Activated B cell treated with CpG ODN at 0.5 μM for 24 hours (primary cell): ENCODE measurements at regions of chr20 and their contacts with region 1.

Region 1: DNA sequence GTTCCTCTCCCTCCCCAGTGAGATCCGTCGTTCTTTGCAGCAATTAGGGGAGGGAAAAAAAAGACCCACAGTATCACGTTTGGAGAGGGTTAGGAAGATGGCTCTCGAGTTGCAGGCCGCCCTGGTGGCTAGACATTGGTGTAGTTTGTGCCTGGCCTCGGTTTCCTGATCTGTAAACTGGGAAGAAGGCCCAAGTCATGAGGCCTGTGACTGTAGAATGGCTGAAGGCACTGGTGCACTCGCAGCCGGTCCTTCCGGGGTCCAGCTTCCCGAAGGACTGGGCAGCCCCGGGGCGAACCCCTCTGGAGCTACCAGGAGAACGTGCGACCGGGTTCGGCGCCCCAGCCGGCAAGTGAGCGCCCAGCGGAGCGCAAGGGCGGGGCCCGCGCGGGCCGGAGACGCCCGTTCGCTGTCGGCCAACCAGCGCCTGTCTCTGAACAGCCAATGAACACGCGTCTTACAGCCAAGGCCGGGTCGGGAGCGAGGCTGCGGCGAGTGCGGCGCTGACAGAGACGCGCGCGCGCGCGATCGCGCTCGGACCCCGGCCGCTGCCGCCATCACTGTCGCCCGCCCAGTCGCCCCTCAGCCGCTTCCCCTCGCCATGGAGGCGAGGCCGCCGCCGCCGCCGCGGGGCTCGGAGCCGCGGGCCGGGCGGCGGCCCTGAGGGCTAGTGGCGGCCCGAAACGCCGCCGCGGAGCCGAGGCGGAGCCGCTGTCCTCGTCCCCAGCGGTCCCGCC is at the start of gene PTPRA:
- DNase-seq: peak; percentile 90
- ATAC-seq: peak; percentile 94
- H3K4me3 Mint-ChIP-seq: peak within 1 kb of the TSS; percentile 94
- H3K27ac Mint-ChIP-seq: peak within 1 kb of the TSS; percentile 80
- H3K4me1 Mint-ChIP-seq: peaks cover 38% of the 10 kb centered on the region
- H3K27me3 Mint-ChIP-seq: peaks cover 4% of the 10 kb centered on the region
- CTCF ChIP-seq: no peak
- total RNA-seq, gene PTPRA: 43.6 and 46.7 TPM in 2 replicates

Region 2: GRCh38 chr20:2508631-2509467 is 364.3 kb before region 1 on chr20 and contains the start of gene ZNF343:
- CTCF ChIA-PET with region 1: no interaction called
- POLR2A ChIA-PET with region 1: no interaction called
- intact Hi-C with region 1: loop called (anchors 1 kb)
- DNase-seq: peak; percentile 72
- ATAC-seq: peak; percentile 93
- H3K4me3 Mint-ChIP-seq: peak within 1 kb of the TSS; percentile 100
- H3K27ac Mint-ChIP-seq: peak within 1 kb of the TSS; percentile 96
- H3K4me1 Mint-ChIP-seq: peaks cover 23% of the 10 kb centered on the region
- H3K27me3 Mint-ChIP-seq: peaks cover 18% of the 10 kb centered on the region
- CTCF ChIP-seq: no peak
- total RNA-seq, gene ZNF343: 14.8 and 16.6 TPM in 2 replicates

Region 3: GRCh38 chr20:2840138-2840966 is 32.8 kb before region 1 on chr20 and contains the starts of genes PCED1A and VPS16:
- CTCF ChIA-PET with region 1: no interaction called
- POLR2A ChIA-PET with region 1: interaction called, 17 read pairs
- intact Hi-C with region 1: loop called (anchors 1 kb)
- DNase-seq: peak; percentile 96
- ATAC-seq: peak; percentile 92
- H3K4me3 Mint-ChIP-seq: peak within 1 kb of the TSS; percentile 86
- H3K27ac Mint-ChIP-seq: peak within 1 kb of the TSS; percentile 82
- H3K4me1 Mint-ChIP-seq: peaks cover 28% of the 10 kb centered on the region
- H3K27me3 Mint-ChIP-seq: no peaks in the 10 kb centered on the region
- CTCF ChIP-seq: no peak
- total RNA-seq, gene PCED1A: 53.2 and 59.1 TPM in 2 replicates
- total RNA-seq, gene VPS16: 54.7 and 56.9 TPM in 2 replicates

Region 4: DNA sequence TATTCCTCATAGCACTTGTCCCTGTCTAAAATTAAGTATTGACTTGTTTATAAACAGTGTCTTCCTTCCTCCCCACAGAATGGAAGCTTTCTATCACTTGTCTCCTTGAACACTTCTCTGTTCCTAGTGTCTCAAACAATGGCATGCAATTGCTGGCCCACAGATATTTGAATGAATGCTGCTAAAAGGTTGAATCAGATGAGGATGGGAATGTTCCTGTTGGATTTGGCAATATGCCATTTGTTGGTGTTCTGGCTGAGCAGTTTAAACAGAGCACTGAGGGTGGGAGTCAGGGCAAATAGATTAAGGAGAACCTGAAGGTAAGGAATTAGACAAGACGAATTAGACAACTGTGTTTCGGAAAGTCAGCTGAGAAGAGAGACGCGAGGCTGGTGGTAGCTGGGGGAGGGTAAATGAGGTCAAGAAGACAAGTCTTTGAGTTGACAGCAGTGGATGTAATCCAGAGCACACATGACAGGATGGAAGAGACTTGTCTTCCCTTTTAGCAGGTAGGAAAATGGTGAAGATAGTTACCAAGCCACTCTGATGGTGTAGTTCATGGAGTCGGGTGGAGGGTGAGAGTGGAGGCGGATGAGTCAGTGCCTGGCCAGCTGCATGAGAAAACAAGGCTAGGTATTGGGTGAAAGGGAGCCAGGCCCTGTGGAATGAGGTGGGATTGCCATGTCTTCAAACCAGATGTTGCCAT is 111.9 kb after region 1 on chr20:
- CTCF ChIA-PET with region 1: no interaction called
- POLR2A ChIA-PET with region 1: no interaction called
- intact Hi-C with region 1: loop called (anchors 5 kb)
- DNase-seq: no peak
- ATAC-seq: no peak
- H3K4me3 Mint-ChIP-seq: no peak overlapping the region
- H3K27ac Mint-ChIP-seq: no peak overlapping the region
- H3K4me1 Mint-ChIP-seq: peaks cover 2% of the 10 kb centered on the region
- H3K27me3 Mint-ChIP-seq: no peaks in the 10 kb centered on the region
- CTCF ChIP-seq: no peak

Region 5: DNA sequence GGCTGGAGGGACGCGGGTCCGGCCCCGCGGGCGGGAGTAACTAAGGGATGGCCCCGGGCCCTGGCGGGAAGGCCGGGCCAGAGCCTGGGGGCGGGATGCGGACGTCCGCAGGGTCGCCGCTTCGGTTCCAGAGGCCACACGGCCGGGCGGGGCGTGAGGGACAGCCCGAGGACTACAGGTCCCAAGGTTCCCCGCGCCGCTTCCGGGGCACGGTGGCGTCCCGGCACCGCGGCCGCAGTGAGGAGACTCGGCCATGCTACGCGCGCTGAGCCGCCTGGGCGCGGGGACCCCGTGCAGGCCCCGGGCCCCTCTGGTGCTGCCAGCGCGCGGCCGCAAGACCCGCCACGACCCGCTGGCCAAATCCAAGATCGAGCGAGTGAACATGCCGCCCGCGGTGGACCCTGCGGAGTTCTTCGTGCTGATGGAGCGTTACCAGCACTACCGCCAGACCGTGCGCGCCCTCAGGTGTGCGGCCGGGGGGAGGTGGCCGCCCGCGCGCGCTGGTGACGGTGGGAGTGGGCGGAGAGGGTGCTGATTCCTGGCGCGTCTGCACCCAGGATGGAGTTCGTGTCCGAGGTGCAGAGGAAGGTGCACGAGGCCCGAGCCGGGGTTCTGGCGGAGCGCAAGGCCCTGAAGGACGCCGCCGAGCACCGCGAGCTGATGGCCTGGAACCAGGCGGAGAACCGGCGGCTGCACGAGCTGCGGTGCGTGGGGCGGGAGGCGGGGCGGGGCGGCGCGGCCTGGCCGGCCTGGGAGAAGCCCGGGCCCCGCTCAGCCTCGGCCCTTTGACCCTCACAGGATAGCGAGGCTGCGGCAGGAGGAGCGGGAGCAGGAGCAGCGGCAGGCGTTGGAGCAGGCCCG is 172.9 kb after region 1 on chr20 and contains the start of gene MRPS26:
- CTCF ChIA-PET with region 1: no interaction called
- POLR2A ChIA-PET with region 1: interaction called, 5 read pairs
- intact Hi-C with region 1: loop called (anchors 5 kb)
- DNase-seq: peak; percentile 88
- ATAC-seq: peak; percentile 91
- H3K4me3 Mint-ChIP-seq: peak within 1 kb of the TSS; percentile 84
- H3K27ac Mint-ChIP-seq: peak within 1 kb of the TSS; percentile 89
- H3K4me1 Mint-ChIP-seq: peaks cover 14% of the 10 kb centered on the region
- H3K27me3 Mint-ChIP-seq: no peaks in the 10 kb centered on the region
- CTCF ChIP-seq: no peak
- total RNA-seq, gene MRPS26: 30.6 and 34.7 TPM in 2 replicates

Region 6: DNA sequence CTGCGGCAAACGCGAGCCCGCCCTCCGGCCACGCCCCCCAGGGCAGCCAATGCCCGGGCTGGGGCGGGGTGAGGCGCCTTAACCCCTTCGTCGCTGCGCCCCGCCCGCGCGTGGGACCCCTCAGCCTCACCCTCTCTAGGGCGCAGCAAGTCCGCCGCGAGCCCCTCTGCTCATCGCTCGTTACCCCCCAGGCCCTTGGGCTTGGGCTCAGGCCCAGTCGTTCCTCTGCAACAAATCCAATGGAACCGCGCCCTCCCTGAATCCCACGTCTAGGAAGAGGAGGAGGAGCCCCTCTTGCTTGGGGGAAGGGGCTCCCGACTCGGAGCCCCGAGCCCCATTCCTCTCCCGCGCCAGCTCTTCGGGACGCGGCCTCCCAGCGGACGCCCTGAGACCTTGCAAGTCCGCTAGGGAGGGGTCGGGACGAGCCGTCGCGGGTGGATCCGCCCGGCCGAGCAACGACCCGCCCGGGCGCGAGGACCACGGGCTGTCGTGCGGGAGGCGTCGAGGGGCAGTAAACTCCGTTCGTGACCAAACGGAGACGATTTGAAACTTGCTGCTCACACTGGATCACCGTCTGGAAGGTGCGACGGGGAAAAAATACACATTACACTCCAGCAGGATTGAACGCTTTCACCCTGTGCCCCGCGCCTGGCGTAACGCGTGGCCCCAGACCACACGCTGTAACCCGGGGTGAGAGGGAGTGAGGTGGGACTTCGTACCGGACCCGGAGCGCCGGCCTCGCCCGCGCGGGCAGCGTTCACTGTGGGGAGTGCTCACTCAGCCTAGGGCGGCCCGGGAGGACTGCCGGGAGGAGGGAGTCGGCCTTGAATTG is 300.6 kb after region 1 on chr20:
- CTCF ChIA-PET with region 1: no interaction called
- POLR2A ChIA-PET with region 1: no interaction called
- intact Hi-C with region 1: loop called (anchors 1 kb)
- DNase-seq: peak; percentile 93
- ATAC-seq: peak; percentile 32
- H3K4me3 Mint-ChIP-seq: peak overlapping the region; percentile 82
- H3K27ac Mint-ChIP-seq: no peak overlapping the region
- H3K4me1 Mint-ChIP-seq: peaks cover 16% of the 10 kb centered on the region
- H3K27me3 Mint-ChIP-seq: peaks cover 30% of the 10 kb centered on the region
- CTCF ChIP-seq: no peak